Pancreas (tissue), 10 donors: ENCODE measurements at regions of chr16 and their contacts with region 1.

Region 1: GRCh38 chr16:87778830-87779579 is 13.2 kb upstream of the KLHDC4 start:
- DNase-seq: peak; percentile 79 to 98 (median 92)
- ATAC-seq: peak; percentile 89 to 94 (median 92)
- H3K4me3 ChIP-seq: no peak overlapping the region
- H3K27ac ChIP-seq: peak overlapping the region in 1 of 4 donors; percentile 37
- H3K4me1 ChIP-seq: peaks cover 3 to 6% (median 4%) of the 10 kb centered on the region in 3 donors
- H3K27me3 ChIP-seq: no peaks in the 10 kb centered on the region
- CTCF ChIP-seq: peak; percentile 97 to 100 (median 98)

Region 2: GRCh38 chr16:87687126-87687910 is 91.7 kb before region 1 on chr16:
- intact Hi-C with region 1: no loop called
- DNase-seq: no peak
- ATAC-seq: no peak
- H3K4me3 ChIP-seq: no peak overlapping the region
- H3K27ac ChIP-seq: no peak overlapping the region
- H3K4me1 ChIP-seq: no peaks in the 10 kb centered on the region
- H3K27me3 ChIP-seq: no peaks in the 10 kb centered on the region
- CTCF ChIP-seq: no peak

Region 3: DNA sequence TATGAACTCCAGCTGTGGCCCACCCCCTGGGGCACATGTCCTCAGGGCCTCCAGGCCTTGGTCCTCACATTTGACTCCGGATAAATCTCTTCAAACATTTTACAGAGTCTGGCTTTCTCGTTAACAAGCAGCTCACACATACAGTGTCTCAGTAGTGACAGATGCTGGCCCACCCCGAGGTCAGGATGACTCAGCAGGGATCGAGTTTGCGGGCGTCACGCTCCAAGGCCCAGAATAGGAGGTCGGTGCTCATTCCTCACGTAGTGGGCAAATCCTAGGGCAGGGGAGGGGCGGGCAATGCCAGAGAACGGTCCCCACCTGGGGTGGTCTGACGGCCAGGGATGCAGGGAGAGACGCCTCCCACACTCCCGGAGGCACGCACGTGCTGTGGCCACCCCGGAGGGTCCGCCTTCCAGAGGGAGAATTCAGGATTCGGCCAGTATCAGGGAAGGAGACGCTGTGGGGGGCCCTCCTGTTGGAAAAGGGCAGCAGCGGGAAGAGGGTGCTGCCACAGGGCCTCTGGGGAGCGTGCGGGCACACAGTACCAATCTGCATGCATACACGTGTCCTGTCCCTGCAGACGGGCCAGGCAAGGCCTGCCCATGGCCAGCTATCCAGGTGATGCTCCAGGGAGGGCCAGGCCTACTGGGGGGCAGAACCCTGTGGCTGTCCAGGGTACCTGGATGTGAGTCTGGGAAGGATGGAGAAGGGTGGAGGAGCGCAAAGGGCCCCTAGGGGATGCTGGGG is 81.7 kb after region 1 on chr16:
- intact Hi-C with region 1: loop called in 1 of 3 experiments (anchors 5 kb)
- DNase-seq: peak in 1 of 6 donors; percentile 58
- ATAC-seq: peak in 1 of 4 donors; percentile 16
- H3K4me3 ChIP-seq: no peak overlapping the region
- H3K27ac ChIP-seq: no peak overlapping the region
- H3K4me1 ChIP-seq: peaks cover 8 to 20% (median 15%) of the 10 kb centered on the region in 3 donors
- H3K27me3 ChIP-seq: no peaks in the 10 kb centered on the region
- CTCF ChIP-seq: no peak

Region 4: DNA sequence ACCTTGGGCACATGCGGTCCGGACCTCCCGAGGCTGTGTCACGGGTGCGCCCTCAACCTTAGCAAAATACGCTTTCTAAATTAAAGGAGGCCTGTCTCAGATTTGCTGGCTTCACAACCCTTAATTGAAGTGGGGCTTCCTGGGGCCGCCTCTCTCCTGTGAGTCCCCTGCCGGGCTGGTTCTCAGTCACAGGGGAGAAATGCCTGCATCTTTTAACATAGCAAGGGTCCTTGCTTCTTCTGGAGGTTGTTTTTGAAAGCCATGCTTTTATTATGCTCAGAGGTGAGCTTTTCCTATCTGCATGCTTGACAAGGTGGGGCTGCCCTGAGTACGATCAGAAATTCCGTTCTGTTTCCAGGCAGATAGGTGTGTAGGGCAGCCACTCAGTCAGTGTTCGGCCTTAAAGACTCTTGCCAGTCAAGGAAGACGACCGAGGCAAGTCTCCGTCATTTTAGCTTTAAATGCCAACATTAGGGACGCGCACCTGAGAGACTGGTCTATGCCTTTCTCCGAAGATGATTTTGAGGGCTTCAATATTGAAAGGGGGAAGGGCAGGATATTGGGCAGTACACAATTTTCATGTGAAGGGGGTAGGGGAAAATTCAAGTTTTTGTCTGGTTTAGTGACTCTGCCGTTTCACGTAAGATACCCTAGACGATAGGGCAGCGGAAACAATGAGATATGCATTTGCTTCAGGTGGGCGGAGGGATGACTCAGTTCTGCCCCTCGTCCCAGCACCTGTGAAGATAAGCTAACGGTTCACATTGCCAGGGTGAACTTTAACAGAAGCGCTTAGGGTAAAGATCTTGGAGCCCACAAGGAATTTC is 95.8 kb after region 1 on chr16:
- intact Hi-C with region 1: loop called in 1 of 3 experiments (anchors 2 kb)
- DNase-seq: no peak
- ATAC-seq: no peak
- H3K4me3 ChIP-seq: no peak overlapping the region
- H3K27ac ChIP-seq: no peak overlapping the region
- H3K4me1 ChIP-seq: peaks cover 0 to 12% (median 0%) of the 10 kb centered on the region in 3 donors
- H3K27me3 ChIP-seq: no peaks in the 10 kb centered on the region
- CTCF ChIP-seq: no peak

Region 5: GRCh38 chr16:87895641-87896141 is 116.7 kb after region 1 on chr16:
- intact Hi-C with region 1: loop called in 1 of 3 experiments (anchors 10 kb)
- DNase-seq: no peak
- ATAC-seq: peak in 3 of 4 donors; percentile 19 to 78 (median 56)
- H3K4me3 ChIP-seq: no peak overlapping the region
- H3K27ac ChIP-seq: no peak overlapping the region
- H3K4me1 ChIP-seq: no peaks in the 10 kb centered on the region
- H3K27me3 ChIP-seq: no peaks in the 10 kb centered on the region
- CTCF ChIP-seq: no peak